A673 (cell line): ENCODE measurements at regions of chr16 and their contacts with region 1.

Region 1: GRCh38 chr16:68448360-68448970 is at the start of gene SMPD3:
- DNase-seq: peak; percentile 100
- H3K4me3 ChIP-seq: peak within 1 kb of the TSS; percentile 35
- H3K27ac ChIP-seq: no peak within 1 kb of the TSS
- H3K4me1 ChIP-seq: peaks cover 9% of the 10 kb centered on the region
- H3K27me3 ChIP-seq: peaks cover 24% of the 10 kb centered on the region
- CTCF ChIP-seq: no peak
- total RNA-seq, gene SMPD3: 0.17 and 0.70 TPM in 2 replicates

Region 2: GRCh38 chr16:68480084-68480995 is 31.9 kb after region 1 on chr16:
- CTCF ChIA-PET with region 1: no interaction called
- POLR2A ChIA-PET with region 1: no interaction called
- intact Hi-C with region 1: loop called (anchors 5 kb)
- DNase-seq: no peak
- H3K4me3 ChIP-seq: no peak overlapping the region
- H3K27ac ChIP-seq: no peak overlapping the region
- H3K4me1 ChIP-seq: no peaks in the 10 kb centered on the region
- H3K27me3 ChIP-seq: peaks cover 6% of the 10 kb centered on the region
- CTCF ChIP-seq: no peak

Region 3: GRCh38 chr16:68506331-68507053 is 58.0 kb after region 1 on chr16:
- CTCF ChIA-PET with region 1: no interaction called
- POLR2A ChIA-PET with region 1: no interaction called
- intact Hi-C with region 1: loop called (anchors 5 kb)
- DNase-seq: no peak
- H3K4me3 ChIP-seq: no peak overlapping the region
- H3K27ac ChIP-seq: no peak overlapping the region
- H3K4me1 ChIP-seq: no peaks in the 10 kb centered on the region
- H3K27me3 ChIP-seq: peaks cover 57% of the 10 kb centered on the region
- CTCF ChIP-seq: no peak